Right ventricle myocardium inferior (tissue), 1 donor: ENCODE measurements at regions of chr9 and their contacts with region 1.

Region 1: DNA sequence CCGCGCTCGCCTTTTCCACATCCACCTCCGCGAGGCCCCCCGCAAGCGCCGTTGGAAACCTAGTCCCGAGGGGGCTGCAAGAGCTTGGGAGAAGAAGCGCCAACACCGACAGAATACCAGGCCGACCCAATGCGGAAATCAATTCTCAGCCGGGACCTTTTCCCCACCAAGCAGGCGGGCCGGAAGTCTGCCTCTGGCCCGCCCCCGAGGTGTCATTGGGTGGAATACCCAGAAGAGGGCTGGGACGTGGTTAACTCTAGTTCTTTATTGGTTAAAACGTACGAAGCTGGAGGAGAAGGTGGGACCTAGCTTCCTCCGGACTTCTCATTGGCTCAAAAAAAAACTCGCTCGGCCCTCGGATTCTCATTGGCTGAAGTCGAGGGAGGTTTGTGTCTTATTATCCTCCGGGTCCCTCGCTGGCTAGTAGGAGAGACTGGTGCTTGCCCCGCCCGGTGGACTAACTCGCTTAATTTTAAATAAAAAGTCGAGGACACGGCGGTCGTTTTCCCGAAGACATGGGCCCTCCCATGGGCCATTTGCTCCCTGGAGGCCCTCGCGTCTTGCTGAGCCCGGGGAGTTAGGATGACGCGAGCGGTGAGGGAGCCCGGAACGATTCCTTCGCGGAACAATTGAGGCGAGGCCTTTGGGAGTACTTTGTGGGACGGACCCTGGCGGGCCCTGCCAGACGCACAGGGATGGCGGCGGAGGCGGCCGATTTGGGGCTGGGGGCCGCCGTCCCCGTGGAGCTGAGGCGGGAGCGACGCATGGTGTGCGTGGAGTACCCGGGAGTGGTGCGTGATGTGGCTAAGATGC is at the start of gene GTF3C5:
- DNase-seq: peak; percentile 95
- ATAC-seq: peak; percentile 99
- total RNA-seq, gene GTF3C5: 58.0 TPM

Region 2: GRCh38 chr9:133149126-133150107 is 118.9 kb after region 1 on chr9:
- intact Hi-C with region 1: loop called (anchors 5 kb)
- DNase-seq: peak; percentile 95
- ATAC-seq: peak; percentile 79

Region 3: GRCh38 chr9:133356391-133357091 is 326.0 kb after region 1 on chr9 and contains the starts of genes SURF1 and SURF2:
- intact Hi-C with region 1: loop called (anchors 10 kb)
- DNase-seq: peak; percentile 96
- ATAC-seq: peak; percentile 93
- total RNA-seq, gene SURF1: 62.6 TPM
- total RNA-seq, gene SURF2: 13.2 TPM